Activated T-helper 1 cell treated with anti-CD3 and anti-CD28 coated beads, Interleukin-12 subunit alpha, Interleukin-12 subunit beta, Interleukin-2, Interleukin-4 antibody, amounts not matched to agents 30 ng/mL and 10 ng/mL and 1 ng/mL, durations not matched to agents 14 hours and 24 hours and 36 hours (primary cell): ENCODE measurements at regions of chrX and their contacts with region 1.

Region 1: DNA sequence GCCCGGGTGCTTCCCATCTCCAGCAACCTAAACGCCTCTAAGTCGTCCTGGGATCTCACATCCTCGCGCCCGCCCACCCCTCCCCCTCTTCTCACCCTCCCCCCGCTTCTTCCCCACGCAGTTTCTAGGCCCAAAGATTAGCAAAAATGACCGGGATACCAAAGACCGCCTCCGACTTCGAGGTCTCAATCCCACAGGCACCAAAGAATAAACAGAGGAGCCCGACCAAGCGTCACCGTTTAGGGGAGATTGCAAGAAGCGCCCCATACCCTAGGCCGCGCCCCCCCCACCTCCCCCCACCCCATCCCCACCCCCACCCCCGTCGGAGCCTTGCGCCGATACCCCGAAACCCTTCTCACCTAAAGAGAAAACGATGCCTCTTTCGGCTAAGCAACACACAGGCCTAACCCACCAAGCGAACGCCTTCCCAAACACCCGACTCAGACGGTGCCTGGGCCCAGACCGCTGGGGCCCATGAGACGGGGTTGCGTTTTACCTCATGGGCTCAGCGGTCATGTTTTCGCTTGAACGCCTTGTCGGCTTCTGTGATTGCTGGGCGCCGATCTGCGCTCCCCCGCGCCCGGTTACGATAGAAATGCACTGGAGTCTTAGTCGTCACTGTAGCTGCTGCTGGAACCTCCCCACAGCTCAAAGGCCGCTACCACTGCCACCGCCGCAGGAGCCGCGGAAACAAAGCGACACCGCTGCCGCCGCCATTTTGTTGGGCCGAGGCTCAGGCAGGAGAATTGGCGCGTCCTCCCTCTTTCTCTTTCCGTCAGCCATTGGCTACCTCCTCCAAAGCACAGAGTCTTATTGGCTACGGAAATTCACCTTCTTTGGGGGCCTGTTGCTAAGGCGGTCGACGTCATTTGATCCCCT is at the start of gene ATRX:
- DNase-seq: peak; percentile 72
- H3K4me3 Mint-ChIP-seq: peak within 1 kb of the TSS; percentile 100
- H3K27ac Mint-ChIP-seq: peak within 1 kb of the TSS; percentile 100
- H3K4me1 Mint-ChIP-seq: peaks cover 33% of the 10 kb centered on the region
- H3K27me3 Mint-ChIP-seq: no peaks in the 10 kb centered on the region
- total RNA-seq, gene ATRX: 63.9 and 72.7 TPM in 2 replicates

Region 2: DNA sequence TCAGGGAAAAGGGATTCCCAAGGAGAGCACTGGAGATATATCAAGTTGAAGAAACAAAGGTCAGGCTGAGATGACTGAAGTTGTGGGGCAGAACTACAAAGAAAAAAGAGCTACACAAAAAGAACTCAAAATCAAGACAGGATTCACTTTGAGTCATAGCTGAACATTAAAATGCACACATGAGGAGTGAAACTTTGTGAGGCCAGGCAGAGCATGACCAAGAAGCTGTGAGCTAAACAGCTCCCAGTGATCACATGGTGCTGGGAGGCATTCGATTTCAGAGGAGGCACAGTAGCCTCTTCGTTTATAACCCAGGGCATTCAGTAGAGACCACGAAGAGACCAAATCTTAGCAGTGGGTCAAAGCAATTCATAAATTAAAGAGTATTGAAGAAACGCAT is 145.0 kb before region 1 on chrX:
- intact Hi-C with region 1: loop called (anchors 10 kb)
- DNase-seq: no peak
- H3K4me3 Mint-ChIP-seq: no peak overlapping the region
- H3K27ac Mint-ChIP-seq: no peak overlapping the region
- H3K4me1 Mint-ChIP-seq: peaks cover 5% of the 10 kb centered on the region
- H3K27me3 Mint-ChIP-seq: no peaks in the 10 kb centered on the region